Adrenal gland (tissue), 19 donors: ENCODE measurements at regions of chr2 and their contacts with region 1.

Region 1: GRCh38 chr2:191051825-191052778 is 38.1 kb upstream of the STAT1 start:
- DNase-seq: no peak
- H3K4me3 ChIP-seq: no peak overlapping the region
- H3K27ac ChIP-seq: no peak overlapping the region
- H3K4me1 ChIP-seq: peaks cover 0 to 9% of the 10 kb centered on the region in 2 donors
- H3K27me3 ChIP-seq: no peaks in the 10 kb centered on the region
- CTCF ChIP-seq: peak; percentile 44 to 75 (median 66)
- POLR2A ChIP-seq: no peak

Region 2: DNA sequence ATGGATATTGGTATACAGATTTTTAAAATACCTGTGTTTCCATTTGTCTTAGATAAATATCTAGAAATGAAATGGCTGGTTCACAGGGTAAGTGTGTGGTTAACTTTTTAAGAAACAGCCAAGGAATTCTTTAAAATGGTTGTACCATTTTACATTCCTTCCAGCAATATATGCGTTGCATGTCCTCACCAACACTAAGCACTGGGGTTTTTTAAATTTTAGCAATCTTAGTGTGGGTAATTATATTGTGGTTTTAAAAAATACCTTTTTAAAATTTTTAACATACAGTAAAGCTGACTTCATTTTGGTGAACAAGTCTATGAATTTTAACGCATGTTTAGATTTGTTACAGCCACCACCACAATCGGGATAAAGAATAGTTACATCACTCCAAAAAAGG is 861.6 kb before region 1 on chr2:
- intact Hi-C with region 1: no loop called
- DNase-seq: no peak
- H3K4me3 ChIP-seq: no peak overlapping the region
- H3K27ac ChIP-seq: no peak overlapping the region
- H3K4me1 ChIP-seq: peaks cover 0 to 3% of the 10 kb centered on the region in 2 donors
- H3K27me3 ChIP-seq: no peaks in the 10 kb centered on the region
- CTCF ChIP-seq: no peak
- POLR2A ChIP-seq: no peak

Region 3: GRCh38 chr2:191109888-191110287 is 57.8 kb after region 1 on chr2:
- intact Hi-C with region 1: no loop called
- DNase-seq: no peak
- H3K4me3 ChIP-seq: no peak overlapping the region
- H3K27ac ChIP-seq: no peak overlapping the region
- H3K4me1 ChIP-seq: no peaks in the 10 kb centered on the region
- H3K27me3 ChIP-seq: no peaks in the 10 kb centered on the region
- CTCF ChIP-seq: no peak
- POLR2A ChIP-seq: no peak

Region 4: DNA sequence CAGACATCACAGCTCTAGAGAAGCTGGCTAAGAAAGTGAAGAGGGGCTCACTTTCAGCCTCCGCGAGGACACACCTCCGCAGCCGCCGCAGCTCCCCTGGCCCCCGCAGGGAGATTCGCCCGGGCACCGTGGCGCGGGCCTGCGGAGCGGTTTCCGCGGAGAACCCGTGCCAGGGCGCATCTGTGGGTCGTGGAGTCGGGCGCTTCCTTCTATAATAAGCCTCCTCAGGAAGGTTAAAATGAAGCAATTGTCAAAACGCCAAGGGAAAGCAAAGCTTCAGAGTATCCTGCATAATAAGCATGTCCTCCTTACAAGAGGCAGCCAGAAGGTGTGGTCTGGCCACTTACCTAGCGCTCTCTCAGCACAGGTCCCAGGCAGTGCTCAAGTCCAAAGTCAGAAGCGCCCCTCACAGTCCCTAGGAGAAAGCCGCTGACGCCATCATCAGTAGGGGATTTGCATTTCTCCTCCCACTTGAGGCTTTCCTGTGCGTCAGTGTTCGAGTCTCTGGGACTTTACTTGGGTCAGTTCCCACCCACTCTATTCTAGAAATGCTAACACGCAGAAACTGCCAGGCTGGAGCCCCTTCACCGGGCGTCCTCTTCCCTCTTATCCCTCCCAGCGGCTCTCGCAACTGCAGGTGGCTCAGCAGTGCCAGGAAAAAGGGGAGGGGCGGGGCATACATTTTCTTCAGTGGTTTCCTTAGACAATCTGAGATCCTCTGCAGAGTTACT is 98.7 kb after region 1 on chr2 and contains the start of gene STAT4:
- intact Hi-C with region 1: loop called (anchors 5 to 10 kb)
- DNase-seq: peak; percentile 23 to 81 (median 33)
- H3K4me3 ChIP-seq: peak within 1 kb of the TSS; percentile 9 to 53 (median 24)
- H3K27ac ChIP-seq: peak within 1 kb of the TSS in 2 of 5 donors; percentile 55 to 73
- H3K4me1 ChIP-seq: no peaks in the 10 kb centered on the region
- H3K27me3 ChIP-seq: no peaks in the 10 kb centered on the region
- CTCF ChIP-seq: no peak
- POLR2A ChIP-seq: peak in 1 of 2 donors; percentile 5
- total RNA-seq, gene STAT4: 0.52 to 4.9 (median 1.3) TPM

Region 5: GRCh38 chr2:191521608-191522208 is 469.6 kb after region 1 on chr2:
- intact Hi-C with region 1: loop called in 1 of 2 experiments (anchors 10 kb)
- DNase-seq: no peak
- H3K4me3 ChIP-seq: no peak overlapping the region
- H3K27ac ChIP-seq: no peak overlapping the region
- H3K4me1 ChIP-seq: no peaks in the 10 kb centered on the region
- H3K27me3 ChIP-seq: no peaks in the 10 kb centered on the region
- CTCF ChIP-seq: peak; percentile 52 to 81 (median 76)
- POLR2A ChIP-seq: no peak